Dendritic cell treated with granulocyte-macrophage colony-stimulating factor and Interleukin-4, amounts not matched to agents 40 ng/mL and 50 ng/mL, for 4 days (primary cell): ENCODE measurements at regions of chr12 and their contacts with region 1.

Region 1: DNA sequence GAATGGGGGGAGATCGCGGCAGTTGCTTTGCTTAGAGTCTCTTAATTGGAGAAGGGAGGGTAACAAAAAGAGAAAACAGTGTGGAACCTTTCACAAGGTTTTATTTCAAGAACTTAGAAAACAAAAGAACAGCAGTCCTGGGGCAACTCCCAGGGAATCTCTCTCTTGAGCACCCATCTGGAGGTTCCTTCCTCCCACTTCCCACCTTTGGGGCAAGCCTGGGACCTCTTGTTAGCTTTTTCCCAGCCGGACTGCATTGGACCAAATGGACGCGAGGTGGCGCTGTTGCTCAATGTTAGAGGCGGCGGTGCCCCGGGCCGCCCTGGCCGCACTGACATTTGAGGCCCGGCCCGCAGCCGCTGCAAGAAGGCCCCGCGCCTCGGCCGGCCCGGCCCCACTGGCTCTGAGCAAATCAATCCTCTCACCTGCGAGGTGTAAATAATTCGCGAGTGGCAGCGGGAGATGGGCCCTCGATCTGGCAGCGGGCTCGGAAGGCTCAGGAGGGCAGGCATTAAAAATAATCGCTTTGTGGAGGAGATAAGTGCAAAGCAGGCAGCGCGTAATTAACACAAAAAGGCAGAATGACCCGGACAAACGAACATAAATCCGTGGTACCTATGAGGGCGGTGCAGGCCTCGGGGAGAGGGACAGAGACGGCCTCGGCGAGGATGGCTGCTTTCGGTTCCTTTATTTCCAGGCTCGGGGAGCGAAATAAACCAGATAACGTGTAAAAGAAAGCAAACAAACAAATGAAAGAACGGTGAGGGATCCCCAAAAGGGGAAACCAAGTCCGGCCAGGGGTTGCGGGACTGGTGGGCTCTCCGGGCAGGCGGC is 2.7 kb upstream of the HOXC8 start:
- H3K4me3 Mint-ChIP-seq: peak overlapping the region; percentile 74
- H3K27ac Mint-ChIP-seq: peak overlapping the region; percentile 30
- H3K4me1 Mint-ChIP-seq: peaks cover 32% of the 10 kb centered on the region
- H3K27me3 Mint-ChIP-seq: peaks cover 95% of the 10 kb centered on the region

Region 2: DNA sequence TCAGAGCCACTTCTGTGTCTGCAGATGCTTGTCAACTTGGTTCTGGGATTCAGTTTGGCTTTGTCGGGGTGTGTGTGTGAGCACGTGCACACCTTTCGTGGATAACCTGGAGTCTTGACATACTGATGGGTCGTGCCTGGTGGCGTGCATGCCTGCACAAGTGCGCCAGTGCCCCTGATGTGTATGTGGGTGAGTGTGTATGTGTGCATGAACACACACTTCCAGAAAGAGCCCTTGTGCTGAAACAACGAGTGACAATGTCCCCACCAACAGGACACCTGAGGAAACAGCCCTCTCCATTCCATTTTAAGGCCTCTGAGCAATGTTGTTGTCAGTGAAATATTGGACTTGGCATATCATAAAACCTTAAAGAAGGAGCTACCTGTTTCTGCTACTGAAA is 128.8 kb after region 1 on chr12:
- intact Hi-C with region 1: loop called (anchors 5 kb)
- H3K4me3 Mint-ChIP-seq: no peak overlapping the region
- H3K27ac Mint-ChIP-seq: no peak overlapping the region
- H3K4me1 Mint-ChIP-seq: no peaks in the 10 kb centered on the region
- H3K27me3 Mint-ChIP-seq: peaks cover 87% of the 10 kb centered on the region

Region 3: GRCh38 chr12:54201001-54201794 is 195.1 kb after region 1 on chr12:
- intact Hi-C with region 1: loop called (anchors 1 kb)
- H3K4me3 Mint-ChIP-seq: no peak overlapping the region
- H3K27ac Mint-ChIP-seq: no peak overlapping the region
- H3K4me1 Mint-ChIP-seq: peaks cover 25% of the 10 kb centered on the region
- H3K27me3 Mint-ChIP-seq: peaks cover 78% of the 10 kb centered on the region